Stomach (tissue), 19 donors: ENCODE measurements at regions of chr10 and their contacts with region 1.

Region 1: GRCh38 chr10:93702211-93703001 is at the start of gene FRA10AC1:
- DNase-seq: peak; percentile 95 to 97
- H3K4me3 ChIP-seq: peak within 1 kb of the TSS; percentile 57 to 68 (median 59)
- H3K27ac ChIP-seq: peak within 1 kb of the TSS; percentile 76 to 93 (median 86)
- H3K4me1 ChIP-seq: peaks cover 9 to 33% (median 19%) of the 10 kb centered on the region in 4 donors
- H3K27me3 ChIP-seq: no peaks in the 10 kb centered on the region
- CTCF ChIP-seq: peak in 4 of 7 experiments; percentile 33 to 56 (median 50)
- EP300 ChIP-seq: peak; percentile 18
- POLR2A ChIP-seq: peak in 1 of 4 donors; percentile 28
- total RNA-seq, gene FRA10AC1: 1.2 to 42.0 (median 5.3) TPM

Region 2: GRCh38 chr10:93622942-93623341 is 79.5 kb before region 1 on chr10:
- intact Hi-C with region 1: no loop called
- DNase-seq: no peak
- H3K4me3 ChIP-seq: no peak overlapping the region
- H3K27ac ChIP-seq: no peak overlapping the region
- H3K4me1 ChIP-seq: no peaks in the 10 kb centered on the region
- H3K27me3 ChIP-seq: no peaks in the 10 kb centered on the region
- CTCF ChIP-seq: no peak
- EP300 ChIP-seq: no peak
- POLR2A ChIP-seq: no peak

Region 3: GRCh38 chr10:93816123-93816747 is 113.8 kb after region 1 on chr10:
- intact Hi-C with region 1: loop called (anchors 5 kb)
- DNase-seq: peak; percentile 63 to 87
- H3K4me3 ChIP-seq: peak overlapping the region in 1 of 4 donors; percentile 8
- H3K27ac ChIP-seq: peak overlapping the region in 1 of 5 donors; percentile 50
- H3K4me1 ChIP-seq: peaks cover 0 to 11% (median 5%) of the 10 kb centered on the region in 4 donors
- H3K27me3 ChIP-seq: peaks cover 0 to 27% (median 3%) of the 10 kb centered on the region in 3 donors
- CTCF ChIP-seq: peak in 5 of 7 experiments; percentile 26 to 63 (median 57)
- EP300 ChIP-seq: no peak
- POLR2A ChIP-seq: no peak